ENCODE measurements at regions of chr5 and their contacts with region 1.

Region 1: DNA sequence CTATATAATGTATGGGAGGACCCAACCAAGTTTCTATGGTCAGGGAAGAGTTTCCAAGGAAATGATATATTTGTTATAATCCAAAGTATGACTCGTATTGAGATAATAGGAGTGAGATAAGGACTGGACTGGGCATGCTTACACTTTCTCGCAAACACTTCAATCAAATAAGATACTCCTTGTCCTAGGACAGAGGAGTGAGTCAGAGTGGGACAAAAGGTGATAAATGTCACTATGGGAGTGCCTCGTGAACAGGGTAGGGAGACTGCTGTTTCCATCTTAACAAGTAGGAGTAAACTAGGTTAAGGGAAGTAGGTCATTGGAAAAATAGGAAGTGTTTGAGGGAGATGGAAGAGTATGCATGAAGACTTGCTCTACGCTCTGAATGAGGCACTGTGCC is 47.3 kb downstream of the MACIR start:
- DNase-seq: no peak

Region 2: DNA sequence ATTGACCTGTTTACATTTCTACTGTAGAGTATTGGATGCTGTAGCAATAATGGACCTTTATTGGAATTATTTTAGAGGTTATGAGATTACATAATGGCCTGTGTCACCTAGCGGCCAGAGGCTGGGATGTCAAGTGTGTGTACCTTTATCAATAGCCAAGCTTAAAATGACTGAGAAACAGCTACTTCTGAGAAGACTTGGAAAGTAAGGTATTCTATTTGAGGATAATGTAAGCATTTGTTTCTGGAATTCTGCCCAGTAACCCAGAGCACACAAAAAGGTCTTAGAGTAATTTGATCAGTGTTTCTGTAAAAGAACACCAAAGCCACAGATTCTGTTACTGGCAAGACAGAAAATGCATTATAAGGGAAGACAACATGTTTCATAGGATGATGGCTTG is 69.5 kb after region 1 on chr5:
- intact Hi-C with region 1: loop called (anchors 10 kb)
- DNase-seq: no peak

Measured in posterior cingulate gyrus (tissue), 11 donors.